Motor neuron (in vitro differentiated cells): ENCODE measurements at regions of chr18 and their contacts with region 1.

Region 1: GRCh38 chr18:14086458-14087231 is 45.6 kb downstream of the ZNF519 start:
- ATAC-seq: peak; percentile 79 to 94 (median 85)
- H3K4me3 ChIP-seq: no peak overlapping the region
- H3K27ac ChIP-seq: no peak overlapping the region
- H3K4me1 ChIP-seq: no peaks in the 10 kb centered on the region

Region 2: DNA sequence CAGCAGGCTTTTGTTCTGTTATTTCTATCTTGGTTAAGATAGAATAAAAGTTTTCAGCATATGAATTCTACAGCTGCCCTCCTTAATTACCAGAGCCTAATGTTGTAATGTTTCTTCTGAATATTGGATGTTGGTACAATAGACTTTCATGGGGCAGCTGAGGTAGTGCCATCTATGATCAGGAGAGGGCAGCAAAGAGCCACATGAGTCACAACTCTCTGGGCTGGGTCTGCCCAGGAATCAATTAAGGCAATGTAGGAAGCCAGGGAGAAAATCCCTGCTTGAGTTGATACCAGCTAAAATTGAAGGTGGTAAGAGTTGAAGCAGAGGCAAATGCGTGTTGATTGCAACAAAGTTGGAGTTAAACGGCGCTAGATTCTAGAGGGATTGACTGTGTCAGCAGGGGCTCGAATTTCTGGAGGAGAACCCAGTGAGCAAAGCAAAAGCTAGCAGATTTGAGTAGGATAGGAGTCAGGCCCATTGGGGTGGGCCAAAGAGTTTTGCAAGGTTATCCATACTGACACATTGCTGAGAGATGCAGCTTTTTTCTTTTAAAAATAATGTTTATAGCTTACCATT is 273.3 kb before region 1 on chr18:
- in situ Hi-C with region 1: loop called in 3 of 9 experiments (anchors 10 to 25 kb)
- ATAC-seq: peak; percentile 74 to 98 (median 86)
- H3K4me3 ChIP-seq: no peak overlapping the region
- H3K27ac ChIP-seq: no peak overlapping the region
- H3K4me1 ChIP-seq: no peaks in the 10 kb centered on the region

Region 3: GRCh38 chr18:13823707-13824395 is 262.8 kb before region 1 on chr18 and contains the start of gene MC5R:
- in situ Hi-C with region 1: loop called in 5 of 9 experiments (anchors 10 to 25 kb)
- ATAC-seq: peak; percentile 88 to 99 (median 96)
- H3K4me3 ChIP-seq: peak within 1 kb of the TSS; percentile 11 to 40 (median 28)
- H3K27ac ChIP-seq: no peak within 1 kb of the TSS
- H3K4me1 ChIP-seq: no peaks in the 10 kb centered on the region
- total RNA-seq, gene MC5R: 0.13 to 0.38 TPM in 2 of 8 experiments, not detected in the others